Naive thymus-derived CD4-positive, alpha-beta T cell (primary cell): ENCODE measurements at regions of chr13 and their contacts with region 1.

Region 1: DNA sequence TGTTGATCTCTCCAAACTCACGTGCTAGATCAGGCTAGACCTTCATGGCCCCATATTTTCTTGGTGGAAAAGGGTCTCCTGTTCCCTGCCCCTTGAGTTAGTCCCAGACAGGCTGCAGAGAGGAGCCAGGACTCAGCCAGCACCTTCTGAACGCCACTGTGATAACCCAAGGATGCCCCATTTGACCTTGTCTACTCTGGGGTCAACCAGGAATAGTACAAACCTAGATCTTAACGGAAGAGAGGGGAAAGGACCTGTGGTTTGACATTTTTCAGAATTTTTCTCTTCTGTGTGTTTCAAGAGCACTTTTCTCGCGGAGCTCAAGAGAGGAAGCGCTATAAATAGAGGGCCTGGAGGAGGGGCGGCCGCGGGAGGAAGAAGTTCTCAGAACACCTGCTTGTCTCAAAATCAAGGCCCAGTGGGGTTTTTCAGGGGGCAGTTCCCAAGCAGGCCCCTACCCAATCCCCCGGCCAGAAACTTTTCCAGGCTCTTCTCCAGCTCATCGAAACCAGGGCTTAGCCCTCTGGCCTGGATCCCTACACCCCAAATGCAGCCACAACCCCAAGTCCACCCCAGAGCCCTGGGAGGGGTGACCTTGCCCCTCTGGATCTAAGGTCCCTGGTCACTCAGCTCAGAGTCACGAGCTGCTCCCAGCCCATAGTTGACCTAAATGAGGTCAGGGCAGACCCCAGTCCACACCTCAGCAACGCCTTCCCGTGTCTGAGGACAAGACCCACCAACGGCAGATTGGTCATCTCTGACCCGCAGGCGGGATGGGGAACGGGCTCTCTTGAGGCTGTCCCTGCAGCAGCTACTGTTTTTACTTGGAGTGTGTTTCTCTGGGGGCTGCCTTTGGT is 75.6 kb upstream of the TM9SF2 start:
- DNase-seq: peak in 8 of 9 donors; percentile 41 to 71 (median 62)
- ATAC-seq: peak; percentile 68
- H3K4me3 ChIP-seq: peak overlapping the region; percentile 52
- H3K4me3 Mint-ChIP-seq: peak overlapping the region; percentile 69 to 85 (median 77)
- H3K27ac ChIP-seq: peak overlapping the region; percentile 83
- H3K27ac Mint-ChIP-seq: peak overlapping the region in 8 of 9 donors; percentile 91 to 99 (median 96)
- H3K4me1 ChIP-seq: peaks cover 25 to 59% of the 10 kb centered on the region in 2 donors
- H3K4me1 Mint-ChIP-seq: peaks cover 39 to 74% (median 64%) of the 10 kb centered on the region in 7 donors
- H3K27me3 ChIP-seq: no peaks in the 10 kb centered on the region
- H3K27me3 Mint-ChIP-seq: peaks cover 0 to 4% (median 0%) of the 10 kb centered on the region in 5 donors

Region 2: DNA sequence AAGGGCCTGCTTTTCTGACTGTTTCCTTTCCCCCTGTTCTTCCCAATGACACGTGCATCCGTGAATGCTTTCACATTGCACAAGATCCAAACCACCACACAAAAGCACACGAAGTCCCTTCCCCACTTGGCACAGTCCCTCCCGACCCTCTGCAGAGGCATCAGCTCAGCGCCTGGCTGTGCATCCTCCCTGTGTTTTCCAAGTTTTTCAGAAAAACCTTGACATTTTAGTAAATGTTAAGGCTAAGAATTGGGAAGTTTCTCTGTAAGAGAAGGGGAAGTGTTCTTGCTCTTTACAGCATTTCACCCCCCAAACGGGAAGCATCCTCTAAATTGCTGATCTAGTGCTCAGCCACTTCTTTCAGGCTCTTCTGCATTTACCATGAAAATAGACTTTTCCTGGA is 18.9 kb before region 1 on chr13:
- CTCF ChIA-PET with region 1: interaction called, 6 read pairs
- POLR2A ChIA-PET with region 1: interaction called, 64 read pairs
- intact Hi-C with region 1: no loop called
- DNase-seq: no peak
- ATAC-seq: no peak
- H3K4me3 ChIP-seq: no peak overlapping the region
- H3K4me3 Mint-ChIP-seq: peak overlapping the region in 8 of 10 donors; percentile 9 to 74 (median 44)
- H3K27ac ChIP-seq: peak overlapping the region; percentile 2
- H3K27ac Mint-ChIP-seq: peak overlapping the region in 8 of 9 donors; percentile 49 to 91 (median 76)
- H3K4me1 ChIP-seq: peaks cover 6 to 14% of the 10 kb centered on the region in 2 donors
- H3K4me1 Mint-ChIP-seq: peaks cover 21 to 85% (median 62%) of the 10 kb centered on the region in 7 donors
- H3K27me3 ChIP-seq: no peaks in the 10 kb centered on the region
- H3K27me3 Mint-ChIP-seq: no peaks in the 10 kb centered on the region

Region 3: DNA sequence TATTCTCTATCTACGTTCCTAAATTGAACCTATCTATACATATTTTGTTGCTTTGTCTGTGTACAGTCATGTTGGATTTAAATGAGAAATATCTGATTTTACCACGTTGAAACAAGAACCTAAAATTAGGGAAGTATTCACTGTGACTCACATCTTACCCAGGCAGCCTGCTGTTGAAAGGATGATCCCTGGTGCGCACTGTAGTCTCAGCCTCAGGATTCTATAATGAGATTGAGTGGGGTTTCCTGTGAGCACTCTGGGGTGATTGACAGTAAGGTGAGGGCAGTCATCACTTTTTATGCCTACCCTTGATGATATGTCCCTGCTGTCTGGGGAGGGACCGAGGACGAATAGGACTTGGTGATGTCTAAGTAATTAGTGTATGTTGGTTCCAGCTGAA is 698.6 kb after region 1 on chr13:
- CTCF ChIA-PET with region 1: no interaction called
- POLR2A ChIA-PET with region 1: no interaction called
- intact Hi-C with region 1: no loop called
- DNase-seq: no peak
- ATAC-seq: peak; percentile 64
- H3K4me3 ChIP-seq: no peak overlapping the region
- H3K4me3 Mint-ChIP-seq: no peak overlapping the region
- H3K27ac ChIP-seq: no peak overlapping the region
- H3K27ac Mint-ChIP-seq: no peak overlapping the region
- H3K4me1 ChIP-seq: no peaks in the 10 kb centered on the region
- H3K4me1 Mint-ChIP-seq: peaks cover under 1 to 7% (median 5%) of the 10 kb centered on the region in 7 donors
- H3K27me3 ChIP-seq: no peaks in the 10 kb centered on the region
- H3K27me3 Mint-ChIP-seq: no peaks in the 10 kb centered on the region